Activated CD4-positive, alpha-beta memory T cell treated with anti-CD3 and anti-CD28 coated beads, Interleukin-2, amount 10 ng/mL, durations not matched to agents 7 days and 5 days (primary cell): ENCODE measurements at regions of chr3 and their contacts with region 1.

Region 1: DNA sequence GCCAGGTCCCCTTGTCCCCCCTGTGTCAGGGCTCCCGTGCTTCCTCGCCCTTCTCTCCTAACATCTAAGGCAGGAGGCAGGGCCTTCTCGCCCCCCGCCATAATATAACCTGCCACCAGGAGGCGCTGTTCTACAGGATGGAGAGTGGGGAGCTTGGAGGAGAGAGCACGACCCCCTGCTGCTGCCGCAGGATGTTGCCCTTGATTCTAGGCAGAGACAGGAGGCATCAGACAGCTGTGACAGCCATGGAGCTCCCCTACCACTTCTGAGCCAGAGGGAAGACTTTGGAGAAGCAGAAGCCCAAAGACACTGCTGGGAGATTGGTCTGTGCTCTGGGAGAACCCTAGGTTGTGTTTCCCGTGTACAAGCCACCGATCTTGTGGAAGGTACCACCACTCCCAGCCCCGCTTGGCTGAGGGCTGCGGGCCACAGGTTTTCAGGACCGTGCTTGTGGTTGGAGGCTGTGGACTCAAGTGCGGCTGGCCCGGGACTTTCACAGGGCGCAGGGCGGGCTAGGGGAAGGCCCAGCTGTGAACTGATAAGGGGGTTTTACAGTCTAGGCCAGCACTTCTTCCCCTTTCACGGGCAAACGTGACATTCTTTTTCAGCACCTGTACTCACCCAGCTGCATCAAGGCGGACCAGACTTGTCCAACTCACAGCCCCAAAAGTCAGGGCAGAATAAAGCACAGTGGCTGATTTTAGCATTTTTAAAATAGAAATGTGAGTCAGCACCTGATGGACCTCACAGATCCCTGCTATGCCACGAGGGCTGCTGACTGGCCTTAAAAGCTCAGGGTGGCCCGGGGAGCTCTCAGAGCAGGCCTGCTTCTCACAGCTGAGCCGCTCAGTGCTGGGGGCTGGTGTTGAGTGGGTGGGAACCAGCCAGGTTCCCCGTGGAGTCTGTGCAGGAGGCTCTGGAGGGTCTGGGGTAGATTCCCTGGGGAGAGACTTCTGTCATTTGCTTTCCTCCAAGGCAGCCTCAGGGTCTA is 2.6 kb upstream of the TIGIT start:
- DNase-seq: peak; percentile 91
- H3K4me3 Mint-ChIP-seq: peak overlapping the region; percentile 77
- H3K27ac Mint-ChIP-seq: peak overlapping the region; percentile 88
- H3K4me1 Mint-ChIP-seq: peaks cover 46% of the 10 kb centered on the region
- H3K27me3 Mint-ChIP-seq: no peaks in the 10 kb centered on the region

Region 2: DNA sequence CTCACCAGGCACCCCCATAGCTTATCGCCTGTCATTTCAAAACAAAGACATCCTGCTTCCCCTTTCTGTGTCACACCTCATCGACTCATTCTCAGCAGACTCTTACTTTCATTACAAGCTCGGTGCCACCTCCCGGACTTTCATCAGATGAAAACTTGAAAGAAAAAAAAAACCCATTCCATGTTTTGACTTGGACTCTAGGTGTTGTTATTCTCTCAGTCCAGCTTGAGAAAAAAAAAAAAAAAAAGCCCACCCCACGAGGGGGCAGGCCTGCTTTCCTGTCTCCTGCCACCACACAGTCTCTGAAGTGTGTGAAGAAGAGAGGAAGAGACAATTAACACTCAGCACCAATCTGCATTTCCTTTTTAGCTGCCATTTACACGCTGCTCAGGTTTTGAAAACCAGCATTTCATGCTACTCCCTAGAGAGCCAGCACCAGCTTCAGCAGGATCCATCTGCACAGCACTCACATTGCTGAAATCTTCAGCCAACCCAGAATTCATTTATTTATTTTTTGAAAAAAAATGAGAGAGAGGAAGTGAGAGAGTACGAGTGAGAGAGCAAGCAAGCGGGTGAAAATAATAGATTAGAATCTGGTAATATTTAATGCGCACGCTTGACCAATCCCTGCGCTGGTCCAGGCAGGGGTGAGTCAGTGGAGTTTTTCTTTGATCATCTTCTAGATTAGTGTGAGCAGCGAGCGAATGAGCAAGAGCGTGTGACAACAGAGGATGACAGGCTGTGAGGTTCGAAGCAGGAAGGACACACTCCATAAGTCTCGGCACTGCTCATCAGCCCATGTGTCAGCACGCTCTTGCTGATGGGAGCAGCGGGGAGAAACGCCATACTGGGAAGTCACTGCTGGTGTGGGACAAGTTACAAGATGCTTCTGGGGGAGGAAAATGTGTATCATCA is 77.3 kb before region 1 on chr3:
- CTCF ChIA-PET with region 1: interaction called, 50 read pairs
- POLR2A ChIA-PET with region 1: interaction called, 133 read pairs
- DNase-seq: peak; percentile 82
- H3K4me3 Mint-ChIP-seq: no peak overlapping the region
- H3K27ac Mint-ChIP-seq: no peak overlapping the region
- H3K4me1 Mint-ChIP-seq: peaks cover 17% of the 10 kb centered on the region
- H3K27me3 Mint-ChIP-seq: no peaks in the 10 kb centered on the region

Region 3: DNA sequence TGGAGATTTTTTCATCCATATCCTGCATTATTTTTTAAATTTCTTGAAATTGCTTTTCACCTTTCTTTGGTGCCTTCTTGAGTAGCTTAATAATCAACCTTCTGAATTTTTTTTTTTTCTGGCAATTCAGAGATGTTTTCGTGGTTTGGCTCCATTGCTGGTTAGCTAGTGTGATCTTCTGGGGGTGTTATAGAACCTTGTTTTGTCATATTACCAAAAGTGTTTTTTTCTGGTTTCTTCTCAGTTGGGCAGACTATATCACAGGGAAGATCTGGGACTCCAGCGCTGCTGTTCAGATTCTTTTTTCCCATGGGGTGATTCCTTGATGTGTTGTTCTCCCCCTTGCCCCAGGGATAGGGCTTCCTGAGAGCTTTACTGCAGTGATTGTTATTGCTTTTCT is 21.2 kb before region 1 on chr3:
- CTCF ChIA-PET with region 1: interaction called, 10 read pairs
- POLR2A ChIA-PET with region 1: no interaction called
- DNase-seq: no peak
- H3K4me3 Mint-ChIP-seq: no peak overlapping the region
- H3K27ac Mint-ChIP-seq: no peak overlapping the region
- H3K4me1 Mint-ChIP-seq: peaks cover 8% of the 10 kb centered on the region
- H3K27me3 Mint-ChIP-seq: no peaks in the 10 kb centered on the region

Region 4: GRCh38 chr3:114327665-114328064 is 36.5 kb after region 1 on chr3:
- CTCF ChIA-PET with region 1: interaction called, 10 read pairs
- POLR2A ChIA-PET with region 1: interaction called, 7 read pairs
- DNase-seq: no peak
- H3K4me3 Mint-ChIP-seq: no peak overlapping the region
- H3K27ac Mint-ChIP-seq: peak overlapping the region; percentile 50
- H3K4me1 Mint-ChIP-seq: peaks cover 71% of the 10 kb centered on the region
- H3K27me3 Mint-ChIP-seq: no peaks in the 10 kb centered on the region

Region 5: DNA sequence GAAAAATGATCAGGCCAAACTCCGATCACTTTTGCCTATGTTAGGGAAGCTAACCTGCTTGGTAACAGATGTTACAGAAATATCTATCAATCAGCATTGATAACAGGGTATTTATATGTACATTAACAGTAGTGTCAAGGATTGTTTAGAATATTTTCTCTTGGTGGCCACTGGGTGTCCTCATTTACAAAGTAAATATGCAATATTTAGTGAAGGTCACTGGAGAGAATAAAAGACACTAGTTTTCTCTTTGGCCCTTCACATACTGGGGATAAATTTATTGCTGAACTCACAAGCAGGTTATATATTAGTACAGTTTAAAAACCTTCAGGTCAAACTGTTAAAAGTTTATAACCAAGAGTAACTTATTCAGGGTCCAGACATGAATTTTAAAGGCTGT is 71.6 kb after region 1 on chr3:
- CTCF ChIA-PET with region 1: interaction called, 16 read pairs
- POLR2A ChIA-PET with region 1: interaction called, 3 read pairs
- DNase-seq: no peak
- H3K4me3 Mint-ChIP-seq: no peak overlapping the region
- H3K27ac Mint-ChIP-seq: no peak overlapping the region
- H3K4me1 Mint-ChIP-seq: no peaks in the 10 kb centered on the region
- H3K27me3 Mint-ChIP-seq: no peaks in the 10 kb centered on the region

Region 6: GRCh38 chr3:114418724-114419543 is 127.7 kb after region 1 on chr3:
- CTCF ChIA-PET with region 1: interaction called, 20 read pairs
- POLR2A ChIA-PET with region 1: interaction called, 8 read pairs
- DNase-seq: no peak
- H3K4me3 Mint-ChIP-seq: no peak overlapping the region
- H3K27ac Mint-ChIP-seq: no peak overlapping the region
- H3K4me1 Mint-ChIP-seq: peaks cover 14% of the 10 kb centered on the region
- H3K27me3 Mint-ChIP-seq: peaks cover 2% of the 10 kb centered on the region